ENCODE measurements at regions of chr11 and their contacts with region 1.

Region 1: GRCh38 chr11:9210922-9211320 is 54.2 kb downstream of the DENND5A start:
- DNase-seq: peak; percentile 75
- ATAC-seq: peak; percentile 68
- H3K4me3 ChIP-seq: no peak overlapping the region
- H3K27ac ChIP-seq: peak overlapping the region; percentile 82
- H3K4me1 ChIP-seq: peaks cover 54% of the 10 kb centered on the region
- H3K27me3 ChIP-seq: no peaks in the 10 kb centered on the region
- CTCF ChIP-seq: no peak
- EP300 ChIP-seq: peak; percentile 76 to 78; a peak in 2 of 4 replicates
- POLR2A ChIP-seq: no peak
- RAD21 ChIP-seq: no peak

Region 2: GRCh38 chr11:9231848-9232177 is 20.9 kb after region 1 on chr11:
- CTCF ChIA-PET with region 1: no interaction called
- POLR2A ChIA-PET with region 1: interaction called, 5 read pairs
- RAD21 ChIA-PET with region 1: interaction called, 20 read pairs
- SMC1A ChIA-PET with region 1: interaction called, 10 read pairs
- in situ Hi-C with region 1: no loop called
- intact Hi-C with region 1: no loop called
- DNase-seq: no peak
- ATAC-seq: peak; percentile 89
- H3K4me3 ChIP-seq: 0 out of 2 replicates have a peak overlapping the region, but pooled peaks have one; percentile 20
- H3K27ac ChIP-seq: peak overlapping the region; percentile 49; the same call in 1 of the 2 replicates
- H3K4me1 ChIP-seq: peaks cover 3% of the 10 kb centered on the region; the same call in 1 of the 2 replicates
- H3K27me3 ChIP-seq: no peaks in the 10 kb centered on the region
- CTCF ChIP-seq: no peak
- EP300 ChIP-seq: no peak
- POLR2A ChIP-seq: no peak
- RAD21 ChIP-seq: no peak

Region 3: DNA sequence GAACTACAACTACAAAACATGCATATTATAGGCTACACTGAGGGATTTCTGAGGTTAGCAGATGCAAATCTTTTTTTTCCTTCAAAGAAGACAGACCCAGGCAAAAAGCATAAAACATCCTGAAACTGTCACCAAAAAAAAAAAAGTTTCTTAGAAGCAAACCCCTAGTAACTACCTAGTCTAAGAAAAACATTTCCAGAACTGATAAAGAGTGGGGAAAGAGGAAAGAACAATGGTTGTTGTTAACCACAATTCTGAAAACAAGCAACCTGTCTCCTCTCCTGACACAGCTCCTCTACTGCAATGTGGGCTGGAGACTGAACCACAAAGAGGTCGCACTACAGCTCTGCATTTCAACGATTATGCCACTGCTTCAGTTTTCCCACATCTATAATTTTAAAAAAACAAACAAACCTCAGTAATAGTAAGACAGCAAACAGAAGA is 39.2 kb after region 1 on chr11:
- CTCF ChIA-PET with region 1: interaction called, 3 read pairs
- POLR2A ChIA-PET with region 1: interaction called, 5 read pairs
- RAD21 ChIA-PET with region 1: interaction called, 11 read pairs
- SMC1A ChIA-PET with region 1: interaction called, 19 read pairs
- in situ Hi-C with region 1: no loop called
- intact Hi-C with region 1: loop called (anchors 2 kb)
- DNase-seq: peak; percentile 77
- ATAC-seq: peak; percentile 83
- H3K4me3 ChIP-seq: no peak overlapping the region
- H3K27ac ChIP-seq: peak overlapping the region; percentile 35; the same call in 1 of the 2 replicates
- H3K4me1 ChIP-seq: peaks cover 30% of the 10 kb centered on the region
- H3K27me3 ChIP-seq: no peaks in the 10 kb centered on the region
- CTCF ChIP-seq: no peak
- EP300 ChIP-seq: peak; percentile 42 to 58; a peak in 2 of 4 replicates
- POLR2A ChIP-seq: no peak
- RAD21 ChIP-seq: no peak

Region 4: DNA sequence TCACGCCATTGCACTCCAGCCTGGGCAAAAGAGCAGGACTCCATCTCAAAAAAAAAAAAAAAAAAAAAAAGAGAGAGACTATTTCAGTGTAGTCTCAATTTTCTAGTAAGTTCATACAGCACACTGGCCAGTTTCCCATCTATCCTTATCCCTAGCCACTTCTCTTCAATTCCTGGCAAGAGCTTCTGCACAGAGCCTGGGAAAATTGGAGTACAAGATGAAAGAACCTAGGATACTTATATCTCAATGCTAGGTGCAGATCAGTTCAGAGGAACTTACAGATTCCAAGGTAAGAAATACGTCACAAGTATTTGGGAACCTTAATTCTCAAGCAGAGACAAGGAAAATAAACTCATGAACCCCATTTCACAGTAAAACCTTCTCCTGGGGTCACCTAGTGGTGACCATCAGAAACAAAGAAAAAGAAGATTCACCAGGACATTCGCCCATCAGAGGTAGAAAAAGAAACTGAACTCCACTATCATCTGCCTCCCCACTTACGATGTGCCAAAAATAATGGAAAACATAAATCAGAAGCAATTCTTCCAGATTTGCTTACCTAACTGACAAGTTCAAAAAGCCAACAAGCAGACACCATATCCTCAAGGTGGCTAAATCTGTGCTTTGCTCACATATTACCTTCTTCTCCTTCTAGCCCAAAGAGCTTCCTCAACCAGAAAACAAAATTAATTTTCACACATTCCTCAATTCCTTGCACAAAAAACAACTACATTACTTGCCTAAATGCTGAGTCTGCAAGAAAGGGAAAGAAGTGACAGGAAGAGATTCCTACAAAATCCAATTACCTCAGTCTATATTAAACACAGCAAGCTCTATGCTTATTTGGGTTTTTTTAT is 49.3 kb after region 1 on chr11:
- CTCF ChIA-PET with region 1: interaction called, 8 read pairs
- POLR2A ChIA-PET with region 1: interaction called, 6 read pairs
- RAD21 ChIA-PET with region 1: interaction called, 10 read pairs
- SMC1A ChIA-PET with region 1: interaction called, 11 read pairs
- in situ Hi-C with region 1: no loop called
- intact Hi-C with region 1: loop called (anchors 2 kb)
- DNase-seq: no peak
- ATAC-seq: 0 out of 3 replicates have a peak, but pooled peaks have one; percentile 8
- H3K4me3 ChIP-seq: peak overlapping the region; percentile 50
- H3K27ac ChIP-seq: no peak overlapping the region
- H3K4me1 ChIP-seq: peaks cover 4% of the 10 kb centered on the region; the same call in 1 of the 2 replicates
- H3K27me3 ChIP-seq: no peaks in the 10 kb centered on the region
- CTCF ChIP-seq: peak; percentile 23 to 30 (median 24); a peak in 4 of 6 replicates
- EP300 ChIP-seq: no peak
- POLR2A ChIP-seq: no peak
- RAD21 ChIP-seq: peak; percentile 59

Region 5: DNA sequence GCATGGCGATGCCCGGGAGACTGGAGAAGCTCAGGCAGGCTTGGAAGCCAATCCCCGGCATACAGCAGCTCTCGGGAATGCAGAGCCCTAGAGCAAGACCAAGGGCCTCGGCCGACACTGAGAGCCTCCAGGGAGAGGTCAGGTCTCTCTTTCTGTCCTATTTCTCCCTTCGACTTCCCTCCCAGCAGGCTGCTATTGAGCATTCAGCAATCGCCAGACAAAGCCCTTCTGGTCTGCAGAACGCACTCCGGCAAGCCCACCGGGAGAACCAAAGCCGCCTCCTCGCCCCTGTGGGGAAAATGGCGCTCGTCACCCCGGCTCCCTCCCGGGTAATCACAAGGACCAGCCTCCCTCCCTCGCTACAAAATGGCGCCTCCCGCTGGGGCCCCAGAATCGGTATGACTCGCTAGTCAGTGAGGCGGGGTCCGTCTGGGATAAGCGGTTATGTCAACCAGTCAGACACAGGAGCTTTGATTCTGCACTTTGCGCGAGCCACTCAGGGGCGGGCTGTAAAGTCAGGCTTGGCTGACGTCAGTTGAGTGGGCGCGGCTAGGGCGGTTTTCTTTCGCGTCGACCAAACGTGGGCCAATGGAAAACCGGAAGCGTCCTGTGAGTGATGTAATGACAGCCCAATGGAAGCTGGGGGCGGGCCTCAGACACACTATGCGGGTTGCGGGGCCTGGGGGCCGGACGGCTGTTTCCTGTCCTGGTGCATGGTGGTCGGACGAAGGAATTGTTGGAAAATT is 249.6 kb after region 1 on chr11 and contains the start of gene ZNF143:
- CTCF ChIA-PET with region 1: no interaction called
- POLR2A ChIA-PET with region 1: no interaction called
- RAD21 ChIA-PET with region 1: no interaction called
- SMC1A ChIA-PET with region 1: interaction called, 3 read pairs
- in situ Hi-C with region 1: no loop called
- intact Hi-C with region 1: loop called (anchors 2 kb)
- DNase-seq: peak; percentile 99
- ATAC-seq: peak; percentile 88
- H3K4me3 ChIP-seq: peak within 1 kb of the TSS; percentile 98
- H3K27ac ChIP-seq: peak within 1 kb of the TSS; percentile 100
- H3K4me1 ChIP-seq: peaks cover 7% of the 10 kb centered on the region
- H3K27me3 ChIP-seq: no peaks in the 10 kb centered on the region
- CTCF ChIP-seq: no peak
- EP300 ChIP-seq: peak in 1 of 2 experiments; percentile 9; a peak in 1 of 4 replicates
- POLR2A ChIP-seq: peak; percentile 90
- RAD21 ChIP-seq: no peak
- polyA plus RNA-seq, gene ZNF143: 16.1 to 18.3 TPM

Region 6: GRCh38 chr11:9757809-9758636 is 547.1 kb after region 1 on chr11:
- CTCF ChIA-PET with region 1: no interaction called
- POLR2A ChIA-PET with region 1: no interaction called
- RAD21 ChIA-PET with region 1: no interaction called
- SMC1A ChIA-PET with region 1: no interaction called
- in situ Hi-C with region 1: no loop called
- intact Hi-C with region 1: no loop called
- DNase-seq: no peak
- ATAC-seq: peak; percentile 86
- H3K4me3 ChIP-seq: peak overlapping the region; percentile 88
- H3K27ac ChIP-seq: peak overlapping the region; percentile 66
- H3K4me1 ChIP-seq: peaks cover 44% of the 10 kb centered on the region
- H3K27me3 ChIP-seq: no peaks in the 10 kb centered on the region
- CTCF ChIP-seq: peak; percentile 70 to 87 (median 83); a peak in 5 of 6 replicates
- EP300 ChIP-seq: peak in 1 of 2 experiments; percentile 58; a peak in 1 of 4 replicates
- POLR2A ChIP-seq: peak; percentile 77
- RAD21 ChIP-seq: peak; percentile 79

Measured in GM12878 (cell line).